K562 (cell line): ENCODE measurements at regions of chr6 and their contacts with region 1.

Region 1: GRCh38 chr6:157455731-157456523 is 74.9 kb downstream of the ZDHHC14 start:
- DNase-seq: peak in 2 of 4 experiments; percentile 46 to 54
- ATAC-seq: peak; percentile 46
- H3K4me3 ChIP-seq: no peak overlapping the region
- H3K27ac ChIP-seq: peak overlapping the region; percentile 34; the same call in 2 of the 3 replicates
- H3K4me1 ChIP-seq: peaks cover 35 to 42% of the 10 kb centered on the region in 2 experiments
- H3K27me3 ChIP-seq: no peaks in the 10 kb centered on the region
- CTCF ChIP-seq: peak in 1 of 3 experiments; percentile 8; a peak in 1 of 6 replicates
- EP300 ChIP-seq: no peak
- POLR2A ChIP-seq: no peak
- RAD21 ChIP-seq: no peak

Region 2: GRCh38 chr6:156437121-156437879 is 1018.6 kb before region 1 on chr6:
- CTCF ChIA-PET with region 1: no interaction called
- POLR2A ChIA-PET with region 1: no interaction called
- in situ Hi-C with region 1: no loop called
- intact Hi-C with region 1: no loop called
- DNase-seq: no peak
- ATAC-seq: no peak
- H3K4me3 ChIP-seq: no peak overlapping the region
- H3K27ac ChIP-seq: no peak overlapping the region
- H3K4me1 ChIP-seq: no peaks in the 10 kb centered on the region
- H3K27me3 ChIP-seq: no peaks in the 10 kb centered on the region
- CTCF ChIP-seq: no peak
- EP300 ChIP-seq: no peak
- POLR2A ChIP-seq: no peak
- RAD21 ChIP-seq: no peak

Region 3: GRCh38 chr6:157392927-157393668 is 62.8 kb before region 1 on chr6:
- CTCF ChIA-PET with region 1: no interaction called
- POLR2A ChIA-PET with region 1: no interaction called
- in situ Hi-C with region 1: no loop called
- intact Hi-C with region 1: loop called (anchors 2 kb)
- DNase-seq: peak; percentile 83 to 91 (median 84)
- ATAC-seq: peak; percentile 91
- H3K4me3 ChIP-seq: no peak overlapping the region
- H3K27ac ChIP-seq: peak overlapping the region; percentile 62
- H3K4me1 ChIP-seq: peaks cover 21 to 25% of the 10 kb centered on the region in 2 experiments
- H3K27me3 ChIP-seq: no peaks in the 10 kb centered on the region
- CTCF ChIP-seq: no peak
- EP300 ChIP-seq: peak; percentile 97
- POLR2A ChIP-seq: no peak
- RAD21 ChIP-seq: 0 out of 4 replicates have a peak, but pooled peaks of 1 of the 2 experiments have one; percentile 13